MCF 10A (cell line): ENCODE measurements at regions of chr17 and their contacts with region 1.

Region 1: GRCh38 chr17:41579484-41580243 is 7.0 kb downstream of the KRT14 start:
- DNase-seq: peak; percentile 96
- H3K4me3 Mint-ChIP-seq: peak overlapping the region; percentile 1
- H3K27ac Mint-ChIP-seq: peak overlapping the region; percentile 97
- H3K4me1 Mint-ChIP-seq: peaks cover 60% of the 10 kb centered on the region
- H3K27me3 Mint-ChIP-seq: no peaks in the 10 kb centered on the region
- CTCF ChIP-seq: peak; percentile 87

Region 2: GRCh38 chr17:41615454-41615853 is 35.8 kb after region 1 on chr17:
- CTCF ChIA-PET with region 1: interaction called, 3 read pairs
- POLR2A ChIA-PET with region 1: interaction called, 10 read pairs
- intact Hi-C with region 1: no loop called
- DNase-seq: peak; percentile 75
- H3K4me3 Mint-ChIP-seq: no peak overlapping the region
- H3K27ac Mint-ChIP-seq: peak overlapping the region; percentile 39
- H3K4me1 Mint-ChIP-seq: peaks cover 21% of the 10 kb centered on the region
- H3K27me3 Mint-ChIP-seq: no peaks in the 10 kb centered on the region
- CTCF ChIP-seq: no peak

Region 3: GRCh38 chr17:41624208-41625101 is 44.8 kb after region 1 on chr17 and contains the start of gene KRT17:
- CTCF ChIA-PET with region 1: interaction called, 6 read pairs
- POLR2A ChIA-PET with region 1: interaction called, 13 read pairs
- intact Hi-C with region 1: loop called (anchors 1 kb)
- DNase-seq: peak; percentile 93
- H3K4me3 Mint-ChIP-seq: peak within 1 kb of the TSS; percentile 86
- H3K27ac Mint-ChIP-seq: peak within 1 kb of the TSS; percentile 89
- H3K4me1 Mint-ChIP-seq: peaks cover 47% of the 10 kb centered on the region
- H3K27me3 Mint-ChIP-seq: no peaks in the 10 kb centered on the region
- CTCF ChIP-seq: peak; percentile 19
- total RNA-seq, gene KRT17: 1,990 and 4,105 TPM in 2 replicates

Region 4: DNA sequence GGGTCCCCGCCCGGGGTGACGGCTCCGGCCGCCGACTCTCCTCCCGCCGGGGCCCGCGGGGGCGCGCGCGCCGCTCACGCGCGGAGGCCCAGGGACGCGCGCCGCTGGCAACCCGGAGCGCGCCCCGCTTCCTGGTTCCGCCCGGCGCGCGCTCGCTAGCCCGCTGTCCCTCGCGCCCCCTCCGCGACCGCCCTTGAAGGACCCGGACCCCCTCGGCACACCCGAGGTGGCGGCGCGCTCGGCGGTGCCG is 696.6 kb after region 1 on chr17 and contains the start of gene STAT5B:
- CTCF ChIA-PET with region 1: no interaction called
- POLR2A ChIA-PET with region 1: no interaction called
- intact Hi-C with region 1: no loop called
- DNase-seq: peak; percentile 57
- H3K4me3 Mint-ChIP-seq: peak within 1 kb of the TSS; percentile 84
- H3K27ac Mint-ChIP-seq: peak within 1 kb of the TSS; percentile 89
- H3K4me1 Mint-ChIP-seq: peaks cover 37% of the 10 kb centered on the region
- H3K27me3 Mint-ChIP-seq: no peaks in the 10 kb centered on the region
- CTCF ChIP-seq: no peak
- total RNA-seq, gene STAT5B: 29.8 and 32.6 TPM in 2 replicates